ENCODE measurements at regions of chr11 and their contacts with region 1.

Region 1: DNA sequence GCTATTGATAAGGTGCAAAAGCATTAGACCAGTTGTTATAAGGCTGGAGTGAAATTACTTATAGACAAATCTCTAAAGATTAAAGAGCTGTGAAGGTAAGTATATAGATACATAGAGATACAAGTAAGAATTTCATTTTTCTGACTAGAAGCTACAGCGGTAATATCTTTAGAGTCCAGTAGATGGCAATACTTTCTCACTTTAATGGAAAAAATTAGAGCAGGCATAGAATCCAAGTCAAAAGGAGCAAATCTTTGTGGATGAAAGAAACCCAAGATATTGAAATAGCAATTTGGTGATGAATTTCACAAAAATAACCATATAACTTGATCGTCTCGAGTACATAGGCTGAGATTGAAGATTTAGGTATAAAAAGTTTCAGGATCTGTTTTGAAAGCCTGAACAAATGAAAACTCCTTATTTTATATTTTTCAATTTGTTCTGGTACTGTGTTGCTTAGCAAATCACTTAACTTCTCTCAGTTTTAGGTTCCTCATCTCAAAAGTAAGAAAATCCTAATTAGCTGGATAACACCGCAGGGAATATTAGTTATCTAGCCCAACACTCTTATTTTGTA is 81.9 kb downstream of the UVRAG start:
- DNase-seq: no peak
- ATAC-seq: peak; percentile 67
- H3K4me3 ChIP-seq: no peak overlapping the region
- H3K4me1 ChIP-seq: no peaks in the 10 kb centered on the region
- CTCF ChIP-seq: peak; percentile 29

Region 2: DNA sequence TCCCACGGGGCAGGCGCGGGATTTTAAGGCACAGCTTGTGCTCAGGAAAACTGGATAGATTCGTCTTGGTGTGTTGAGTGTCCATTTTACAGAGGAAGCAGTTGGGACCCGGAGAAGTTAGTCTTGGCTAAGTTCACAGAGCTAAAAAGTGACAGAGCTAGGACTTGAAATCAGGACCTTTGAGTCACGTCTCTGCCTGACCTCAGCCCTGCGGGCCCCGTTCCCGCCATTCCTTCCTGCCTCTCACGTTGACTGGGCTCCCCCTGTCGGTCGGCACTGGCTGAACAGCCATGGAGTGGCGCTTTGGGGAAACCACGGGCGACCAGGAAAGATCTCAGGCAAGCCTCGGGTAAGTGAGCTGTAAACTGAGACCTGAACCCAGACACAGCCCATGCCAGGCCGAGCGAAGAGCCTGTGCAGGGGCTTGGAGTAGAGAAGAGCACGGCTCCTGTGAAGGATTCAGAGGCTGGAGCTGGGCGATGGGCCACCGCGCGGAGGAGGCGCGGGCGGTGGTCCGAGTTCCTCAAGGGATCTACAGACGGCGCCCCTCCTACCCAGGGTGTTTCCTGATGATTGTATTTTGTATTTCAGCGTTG is 255.3 kb after region 1 on chr11:
- intact Hi-C with region 1: loop called (anchors 5 kb)
- DNase-seq: peak; percentile 87 to 93 (median 92)
- ATAC-seq: peak; percentile 44
- H3K4me3 ChIP-seq: no peak overlapping the region
- H3K4me1 ChIP-seq: peaks cover 27% of the 10 kb centered on the region
- CTCF ChIP-seq: peak; percentile 86

Measured in mucosa of descending colon (tissue), 3 donors.